Activated CD8-positive, alpha-beta memory T cell treated with anti-CD3 and anti-CD28 coated beads, Interleukin-2, amount 10 ng/mL, durations not matched to agents 7 days and 5 days (primary cell): ENCODE measurements at regions of chr20 and their contacts with region 1.

Region 1: GRCh38 chr20:35699127-35699975 is at the starts of genes NFS1 and ROMO1:
- DNase-seq: peak; percentile 92
- ATAC-seq: peak; percentile 94
- H3K4me3 Mint-ChIP-seq: peak within 1 kb of the TSS; percentile 90
- H3K27ac Mint-ChIP-seq: peak within 1 kb of the TSS; percentile 98
- H3K4me1 Mint-ChIP-seq: peaks cover 42% of the 10 kb centered on the region
- H3K27me3 Mint-ChIP-seq: no peaks in the 10 kb centered on the region
- total RNA-seq, gene NFS1: 34.6 to 35.1 TPM
- total RNA-seq, gene ROMO1: 115 to 122 TPM

Region 2: GRCh38 chr20:35592339-35592974 is 106.9 kb before region 1 on chr20:
- CTCF ChIA-PET with region 1: no interaction called
- DNase-seq: no peak
- ATAC-seq: no peak
- H3K4me3 Mint-ChIP-seq: no peak overlapping the region
- H3K27ac Mint-ChIP-seq: no peak overlapping the region
- H3K4me1 Mint-ChIP-seq: no peaks in the 10 kb centered on the region
- H3K27me3 Mint-ChIP-seq: peaks cover 15% of the 10 kb centered on the region

Region 3: DNA sequence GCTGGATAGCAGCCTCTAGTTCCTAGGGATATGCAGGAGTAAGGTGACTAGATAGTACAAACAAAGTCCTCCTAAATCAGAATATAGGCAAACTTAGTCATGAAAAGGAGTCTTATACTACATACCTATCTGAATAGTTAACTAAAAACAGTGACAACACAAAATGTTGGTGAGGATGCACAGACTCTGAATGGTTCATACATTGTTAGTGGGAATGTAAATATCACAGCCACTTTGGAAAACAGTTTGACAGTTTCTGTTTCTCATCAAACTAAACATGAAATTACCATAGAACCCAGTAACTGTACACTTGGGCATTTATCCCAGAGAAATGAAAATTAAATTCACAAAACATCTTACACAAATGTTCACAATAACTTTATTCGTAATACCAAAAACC is 17.4 kb before region 1 on chr20:
- CTCF ChIA-PET with region 1: no interaction called
- DNase-seq: no peak
- ATAC-seq: no peak
- H3K4me3 Mint-ChIP-seq: no peak overlapping the region
- H3K27ac Mint-ChIP-seq: no peak overlapping the region
- H3K4me1 Mint-ChIP-seq: no peaks in the 10 kb centered on the region
- H3K27me3 Mint-ChIP-seq: no peaks in the 10 kb centered on the region

Region 4: GRCh38 chr20:35711588-35712209 is 12.3 kb after region 1 on chr20:
- CTCF ChIA-PET with region 1: interaction called, 28 read pairs
- DNase-seq: no peak
- ATAC-seq: peak; percentile 64
- H3K4me3 Mint-ChIP-seq: peak overlapping the region; percentile 56
- H3K27ac Mint-ChIP-seq: peak overlapping the region; percentile 81
- H3K4me1 Mint-ChIP-seq: peaks cover 56% of the 10 kb centered on the region
- H3K27me3 Mint-ChIP-seq: no peaks in the 10 kb centered on the region